Activated T-helper 1 cell treated with anti-CD3 and anti-CD28 coated beads, Interleukin-12 subunit alpha, Interleukin-12 subunit beta, Interleukin-2, Interleukin-4 antibody, amounts not matched to agents 30 ng/mL and 10 ng/mL and 1 ng/mL, durations not matched to agents 14 hours and 24 hours and 36 hours (primary cell): ENCODE measurements at regions of chr1 and their contacts with region 1.

Region 1: DNA sequence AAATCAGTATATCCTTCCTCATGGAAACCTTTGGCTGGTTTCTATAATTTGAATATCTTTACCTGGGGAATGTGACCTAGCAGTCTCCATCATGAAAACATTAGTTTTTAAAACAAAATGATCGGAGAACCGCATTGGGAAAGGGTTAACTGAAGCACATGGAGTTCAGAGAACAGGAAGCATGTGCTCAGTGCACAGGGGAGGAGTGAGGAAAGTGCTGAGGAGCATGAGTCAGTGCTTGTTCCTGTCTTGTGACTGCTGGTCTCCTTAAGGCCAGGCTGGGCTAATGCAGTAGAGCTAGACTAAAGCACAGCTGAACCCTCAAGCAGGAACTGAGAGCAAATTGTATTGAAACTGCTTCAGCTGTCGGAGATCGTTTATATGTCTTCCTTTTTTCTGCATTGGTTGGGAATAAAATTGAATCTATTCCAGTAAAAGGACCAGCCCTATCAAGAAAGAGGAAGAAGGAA is 5.8 kb downstream of the IFI16 start:
- DNase-seq: peak; percentile 67
- H3K4me3 Mint-ChIP-seq: peak overlapping the region; percentile 91
- H3K27ac Mint-ChIP-seq: peak overlapping the region; percentile 87
- H3K4me1 Mint-ChIP-seq: peaks cover 71% of the 10 kb centered on the region
- H3K27me3 Mint-ChIP-seq: no peaks in the 10 kb centered on the region

Region 2: DNA sequence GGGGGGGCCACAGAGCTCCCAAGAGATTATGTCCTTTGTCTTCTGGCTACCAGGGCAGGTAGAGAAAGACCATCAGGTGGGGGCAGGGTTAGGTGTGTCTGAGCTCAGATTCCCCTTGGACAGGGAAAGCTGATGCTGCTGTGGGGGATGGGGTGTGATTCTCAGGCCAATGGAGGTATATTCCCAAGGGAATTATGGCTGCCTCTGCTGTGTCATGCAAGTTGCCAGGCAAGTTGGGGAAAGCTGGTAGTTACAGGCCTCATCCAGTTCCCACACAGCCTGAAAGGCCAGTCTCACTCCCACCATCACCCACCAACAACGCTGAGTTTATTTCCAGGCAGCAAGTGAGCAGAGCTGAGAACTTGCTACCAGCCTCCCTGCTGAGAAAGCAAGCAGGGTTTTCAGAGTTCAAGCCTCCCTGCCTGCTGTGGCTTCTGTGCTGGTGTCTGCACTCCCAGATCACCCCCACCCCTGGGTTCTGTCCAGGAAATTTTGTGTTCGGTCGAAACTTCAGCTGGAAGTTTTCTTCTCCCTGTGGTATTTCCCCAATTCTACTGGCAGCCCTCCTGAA is 15.5 kb after region 1 on chr1:
- intact Hi-C with region 1: loop called (anchors 1 kb)
- DNase-seq: no peak
- H3K4me3 Mint-ChIP-seq: no peak overlapping the region
- H3K27ac Mint-ChIP-seq: peak overlapping the region; percentile 77
- H3K4me1 Mint-ChIP-seq: peaks cover 83% of the 10 kb centered on the region
- H3K27me3 Mint-ChIP-seq: no peaks in the 10 kb centered on the region

Region 3: DNA sequence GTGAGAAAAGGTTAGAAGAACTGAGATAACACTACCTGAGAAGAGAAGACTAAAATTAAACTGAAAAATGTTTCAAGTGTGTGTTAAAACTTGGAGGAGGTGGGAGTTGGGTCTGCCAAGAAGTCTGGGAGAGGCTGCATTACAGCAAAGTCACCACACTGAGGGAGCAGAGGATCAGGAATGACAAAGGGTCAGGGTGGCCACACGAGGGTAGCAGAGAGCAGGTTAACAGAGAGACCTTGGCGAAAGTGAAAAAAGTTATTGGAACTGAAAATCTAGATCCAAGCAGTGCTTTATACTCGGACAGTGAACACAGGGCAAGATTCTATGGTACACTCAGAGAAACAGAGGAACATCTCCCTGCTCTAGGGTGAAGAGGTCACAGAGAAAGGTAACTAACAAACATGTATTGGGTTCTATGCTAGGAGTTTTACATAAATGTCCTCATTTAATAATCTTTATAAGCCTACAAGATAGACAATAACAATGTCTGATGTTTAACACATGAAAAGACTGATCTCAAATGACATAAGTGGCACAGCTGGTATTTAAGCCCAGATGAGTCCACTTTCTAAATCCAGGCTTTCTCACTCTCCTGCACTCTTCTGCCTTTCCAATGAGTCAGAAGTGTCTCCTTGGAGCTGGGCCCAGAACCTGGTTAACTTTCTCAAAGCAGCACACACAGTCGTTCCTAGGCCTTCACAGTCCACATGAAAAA is 145.7 kb after region 1 on chr1:
- intact Hi-C with region 1: no loop called
- DNase-seq: peak; percentile 20
- H3K4me3 Mint-ChIP-seq: no peak overlapping the region
- H3K27ac Mint-ChIP-seq: no peak overlapping the region
- H3K4me1 Mint-ChIP-seq: no peaks in the 10 kb centered on the region
- H3K27me3 Mint-ChIP-seq: peaks cover 10% of the 10 kb centered on the region